ENCODE measurements at regions of chr17 and their contacts with region 1.

Region 1: GRCh38 chr17:19482576-19482975 is 51.1 kb upstream of the SLC47A1 start:
- DNase-seq: peak; percentile 17 to 64
- H3K4me3 ChIP-seq: no peak overlapping the region
- H3K27ac ChIP-seq: no peak overlapping the region
- H3K4me1 ChIP-seq: peaks cover 11% of the 10 kb centered on the region
- H3K27me3 ChIP-seq: no peaks in the 10 kb centered on the region
- CTCF ChIP-seq: no peak

Region 2: DNA sequence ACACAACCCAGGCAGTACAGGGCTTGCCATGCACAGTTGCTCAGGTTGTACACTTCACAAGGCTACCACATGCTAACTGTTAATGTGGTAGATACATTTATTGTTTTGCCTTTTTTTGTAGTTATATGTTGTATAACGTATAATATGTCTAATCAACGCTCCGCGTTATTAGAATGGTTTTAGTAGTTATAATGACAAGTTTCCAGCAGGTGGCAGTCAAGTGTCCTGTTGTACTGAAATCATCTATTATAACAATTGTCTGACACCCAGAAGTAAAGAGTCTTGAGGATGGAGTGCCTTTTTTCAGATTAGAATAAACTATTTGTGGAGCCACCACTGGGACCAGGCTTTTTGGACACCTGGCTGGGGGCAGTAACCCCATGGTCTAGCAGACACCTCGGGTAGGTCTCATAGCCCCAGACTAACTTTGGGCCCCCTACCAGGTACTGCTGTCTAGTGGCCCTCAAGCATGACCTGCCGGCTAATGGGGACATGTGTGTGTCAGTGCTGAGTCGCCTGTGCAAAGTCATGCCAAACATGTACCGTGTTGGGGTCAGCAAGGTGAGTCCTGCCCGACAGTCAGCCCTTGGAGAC is 1341.3 kb before region 1 on chr17:
- CTCF ChIA-PET with region 1: interaction called, 16 read pairs
- POLR2A ChIA-PET with region 1: no interaction called
- intact Hi-C with region 1: no loop called
- DNase-seq: peak in 1 of 2 experiments; percentile 30
- H3K4me3 ChIP-seq: no peak overlapping the region
- H3K27ac ChIP-seq: no peak overlapping the region
- H3K4me1 ChIP-seq: peaks cover 5% of the 10 kb centered on the region; the same call in 1 of the 2 replicates
- H3K27me3 ChIP-seq: no peaks in the 10 kb centered on the region
- CTCF ChIP-seq: peak; percentile 79

Region 3: DNA sequence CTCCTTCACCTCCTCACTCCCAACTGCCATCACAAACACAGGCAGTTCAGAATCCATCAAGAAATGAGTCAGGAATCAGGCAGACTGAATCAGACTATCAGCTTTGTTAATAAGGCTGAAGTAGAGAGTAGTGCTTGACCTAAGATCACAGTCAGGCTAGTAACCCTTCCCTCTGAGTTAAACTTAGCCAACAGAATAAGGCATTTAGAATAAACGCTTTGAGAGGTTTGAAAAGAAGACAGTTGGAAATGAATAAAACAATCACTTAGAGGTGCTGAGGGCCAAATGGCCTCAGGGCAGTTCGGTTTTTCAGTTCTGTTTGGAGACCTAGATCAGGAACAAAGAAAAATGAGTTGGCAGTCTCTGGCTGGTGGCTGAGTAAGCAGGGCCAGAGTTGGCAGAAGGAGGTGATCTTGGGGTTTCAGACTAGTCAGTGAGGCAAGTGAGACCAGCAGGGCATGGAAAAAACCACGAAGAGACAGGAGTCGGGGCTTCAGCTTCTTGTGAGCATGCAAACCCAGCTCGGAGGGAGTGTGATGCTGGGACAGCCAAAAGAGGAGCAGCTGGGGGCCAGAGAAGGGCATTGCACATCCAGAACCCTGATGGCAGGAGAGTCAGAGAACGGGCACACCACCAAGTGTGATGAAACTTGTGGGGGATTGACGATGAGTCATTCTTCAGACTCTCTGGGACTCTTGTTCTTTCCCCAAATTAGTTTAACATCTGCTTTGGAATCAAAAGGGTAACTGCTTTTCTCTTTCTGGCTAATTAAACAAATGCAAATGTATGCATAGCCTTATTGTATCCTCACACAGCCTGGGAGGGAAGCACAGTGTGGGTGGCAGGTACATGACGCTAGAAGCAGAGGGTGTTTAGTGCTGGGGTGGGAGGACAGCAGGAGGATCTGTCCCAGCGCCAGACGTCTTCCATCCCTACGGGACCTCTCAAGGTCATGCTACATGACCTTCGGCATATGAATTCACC is 581.4 kb after region 1 on chr17:
- CTCF ChIA-PET with region 1: no interaction called
- POLR2A ChIA-PET with region 1: interaction called, 11 read pairs
- intact Hi-C with region 1: no loop called
- DNase-seq: peak; percentile 81 to 83
- H3K4me3 ChIP-seq: peak overlapping the region; percentile 19; the same call in 1 of the 2 replicates
- H3K27ac ChIP-seq: peak overlapping the region; percentile 87
- H3K4me1 ChIP-seq: peaks cover 85% of the 10 kb centered on the region
- H3K27me3 ChIP-seq: no peaks in the 10 kb centered on the region
- CTCF ChIP-seq: no peak

Measured in PC-9 (cell line).